ENCODE measurements at regions of chr19 and their contacts with region 1.

Region 1: GRCh38 chr19:17305517-17306284 is at the start of gene MRPL34:
- DNase-seq: peak; percentile 85 to 99 (median 92)
- ATAC-seq: peak; percentile 53
- H3K4me3 ChIP-seq: peak within 1 kb of the TSS; percentile 96
- H3K4me3 Mint-ChIP-seq: peak within 1 kb of the TSS; percentile 94
- H3K27ac ChIP-seq: peak within 1 kb of the TSS; percentile 71 to 85
- H3K27ac Mint-ChIP-seq: peak within 1 kb of the TSS; percentile 90
- H3K4me1 ChIP-seq: peaks cover 66% of the 10 kb centered on the region
- H3K4me1 Mint-ChIP-seq: peaks cover 65% of the 10 kb centered on the region
- H3K27me3 ChIP-seq: no peaks in the 10 kb centered on the region
- H3K27me3 Mint-ChIP-seq: no peaks in the 10 kb centered on the region
- CTCF ChIP-seq: no peak
- total RNA-seq, gene MRPL34: 28.4 to 28.7 TPM

Region 2: GRCh38 chr19:17226002-17226933 is 79.4 kb before region 1 on chr19 and contains the start of gene OCEL1:
- CTCF ChIA-PET with region 1: interaction called, 3 read pairs
- POLR2A ChIA-PET with region 1: interaction called, 9 read pairs
- intact Hi-C with region 1: loop called in 1 of 2 experiments (anchors 2 kb)
- DNase-seq: peak; percentile 90 to 99 (median 96)
- ATAC-seq: peak; percentile 88
- H3K4me3 ChIP-seq: peak within 1 kb of the TSS; percentile 61
- H3K4me3 Mint-ChIP-seq: peak within 1 kb of the TSS; percentile 95
- H3K27ac ChIP-seq: peak within 1 kb of the TSS; percentile 70 to 84
- H3K27ac Mint-ChIP-seq: peak within 1 kb of the TSS; percentile 90
- H3K4me1 ChIP-seq: peaks cover 24% of the 10 kb centered on the region
- H3K4me1 Mint-ChIP-seq: peaks cover 4% of the 10 kb centered on the region
- H3K27me3 ChIP-seq: no peaks in the 10 kb centered on the region
- H3K27me3 Mint-ChIP-seq: no peaks in the 10 kb centered on the region
- CTCF ChIP-seq: no peak
- total RNA-seq, gene OCEL1: 20.5 to 22.2 TPM

Region 3: GRCh38 chr19:17266975-17267788 is 38.5 kb before region 1 on chr19 and contains the start of gene BABAM1:
- CTCF ChIA-PET with region 1: no interaction called
- POLR2A ChIA-PET with region 1: interaction called, 17 read pairs
- intact Hi-C with region 1: loop called in 1 of 2 experiments (anchors 1 kb)
- DNase-seq: peak; percentile 85 to 99 (median 92)
- ATAC-seq: peak; percentile 94
- H3K4me3 ChIP-seq: peak within 1 kb of the TSS; percentile 84
- H3K4me3 Mint-ChIP-seq: peak within 1 kb of the TSS; percentile 83
- H3K27ac ChIP-seq: peak within 1 kb of the TSS; percentile 47 to 63
- H3K27ac Mint-ChIP-seq: peak within 1 kb of the TSS; percentile 69
- H3K4me1 ChIP-seq: peaks cover 39% of the 10 kb centered on the region
- H3K4me1 Mint-ChIP-seq: peaks cover 15% of the 10 kb centered on the region
- H3K27me3 ChIP-seq: no peaks in the 10 kb centered on the region
- H3K27me3 Mint-ChIP-seq: no peaks in the 10 kb centered on the region
- CTCF ChIP-seq: no peak
- total RNA-seq, gene BABAM1: 56.2 to 63.5 TPM

Region 4: GRCh38 chr19:17292286-17293097 is 13.2 kb before region 1 on chr19:
- CTCF ChIA-PET with region 1: interaction called, 27 read pairs
- POLR2A ChIA-PET with region 1: interaction called, 18 read pairs
- intact Hi-C with region 1: loop called (anchors 1 kb)
- DNase-seq: peak; percentile 58 to 91 (median 71)
- ATAC-seq: peak; percentile 98
- H3K4me3 ChIP-seq: peak overlapping the region; percentile 83
- H3K4me3 Mint-ChIP-seq: peak overlapping the region; percentile 92
- H3K27ac ChIP-seq: no peak overlapping the region
- H3K27ac Mint-ChIP-seq: peak overlapping the region; percentile 19
- H3K4me1 ChIP-seq: peaks cover 18% of the 10 kb centered on the region
- H3K4me1 Mint-ChIP-seq: peaks cover 9% of the 10 kb centered on the region
- H3K27me3 ChIP-seq: no peaks in the 10 kb centered on the region
- H3K27me3 Mint-ChIP-seq: peaks cover 4% of the 10 kb centered on the region
- CTCF ChIP-seq: peak; percentile 84

Region 5: DNA sequence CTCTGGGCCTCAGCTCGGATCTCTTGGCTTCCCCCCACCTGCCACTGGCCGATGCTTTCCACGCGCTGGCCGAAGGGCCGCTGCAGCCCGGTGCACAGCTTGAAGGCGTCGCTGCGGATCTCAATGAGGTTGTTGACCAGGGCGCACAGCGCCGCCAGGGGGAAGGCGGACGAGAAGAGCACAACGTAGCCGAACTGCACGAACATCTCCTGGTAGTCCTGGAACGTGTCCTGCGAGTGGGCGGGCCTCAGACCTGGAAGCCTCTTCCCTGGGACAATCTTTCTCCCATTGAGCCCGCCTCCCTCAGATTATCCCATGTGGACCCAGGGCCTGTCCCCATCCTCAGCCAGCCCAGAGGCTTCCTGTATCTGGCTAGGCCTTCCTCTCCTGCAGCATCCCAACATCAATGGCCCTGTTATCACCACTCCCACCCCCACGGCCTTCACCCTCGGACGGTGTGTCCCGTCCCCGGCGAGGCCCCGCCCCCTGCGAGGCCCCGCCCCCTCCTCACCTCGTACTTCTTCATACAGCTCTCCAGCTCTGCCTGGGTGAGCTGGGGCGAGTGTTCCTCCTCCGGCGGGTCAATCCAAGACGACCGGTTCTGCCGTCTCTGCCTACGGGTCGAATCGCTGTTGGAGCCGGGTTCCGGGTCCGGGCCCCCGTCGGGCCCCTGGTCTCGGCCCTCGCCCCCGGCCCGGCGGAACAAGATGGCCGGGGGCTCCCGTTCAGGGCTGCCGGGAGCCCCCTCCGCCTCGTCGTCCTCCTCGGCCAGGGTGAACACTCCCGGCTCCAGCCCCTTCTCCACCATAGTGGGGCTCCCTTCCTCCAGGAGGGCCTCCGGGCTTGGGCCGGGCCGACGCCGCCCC is 22.2 kb after region 1 on chr19:
- CTCF ChIA-PET with region 1: interaction called, 13 read pairs
- POLR2A ChIA-PET with region 1: interaction called, 29 read pairs
- intact Hi-C with region 1: no loop called
- DNase-seq: peak in 13 of 14 experiments; percentile 40 to 82 (median 54)
- ATAC-seq: peak; percentile 73
- H3K4me3 ChIP-seq: peak overlapping the region; percentile 61
- H3K4me3 Mint-ChIP-seq: peak overlapping the region; percentile 85
- H3K27ac ChIP-seq: peak overlapping the region in 1 of 2 donors; percentile 59
- H3K27ac Mint-ChIP-seq: peak overlapping the region; percentile 51
- H3K4me1 ChIP-seq: peaks cover 34% of the 10 kb centered on the region
- H3K4me1 Mint-ChIP-seq: peaks cover 13% of the 10 kb centered on the region
- H3K27me3 ChIP-seq: no peaks in the 10 kb centered on the region
- H3K27me3 Mint-ChIP-seq: no peaks in the 10 kb centered on the region
- CTCF ChIP-seq: no peak

Region 6: DNA sequence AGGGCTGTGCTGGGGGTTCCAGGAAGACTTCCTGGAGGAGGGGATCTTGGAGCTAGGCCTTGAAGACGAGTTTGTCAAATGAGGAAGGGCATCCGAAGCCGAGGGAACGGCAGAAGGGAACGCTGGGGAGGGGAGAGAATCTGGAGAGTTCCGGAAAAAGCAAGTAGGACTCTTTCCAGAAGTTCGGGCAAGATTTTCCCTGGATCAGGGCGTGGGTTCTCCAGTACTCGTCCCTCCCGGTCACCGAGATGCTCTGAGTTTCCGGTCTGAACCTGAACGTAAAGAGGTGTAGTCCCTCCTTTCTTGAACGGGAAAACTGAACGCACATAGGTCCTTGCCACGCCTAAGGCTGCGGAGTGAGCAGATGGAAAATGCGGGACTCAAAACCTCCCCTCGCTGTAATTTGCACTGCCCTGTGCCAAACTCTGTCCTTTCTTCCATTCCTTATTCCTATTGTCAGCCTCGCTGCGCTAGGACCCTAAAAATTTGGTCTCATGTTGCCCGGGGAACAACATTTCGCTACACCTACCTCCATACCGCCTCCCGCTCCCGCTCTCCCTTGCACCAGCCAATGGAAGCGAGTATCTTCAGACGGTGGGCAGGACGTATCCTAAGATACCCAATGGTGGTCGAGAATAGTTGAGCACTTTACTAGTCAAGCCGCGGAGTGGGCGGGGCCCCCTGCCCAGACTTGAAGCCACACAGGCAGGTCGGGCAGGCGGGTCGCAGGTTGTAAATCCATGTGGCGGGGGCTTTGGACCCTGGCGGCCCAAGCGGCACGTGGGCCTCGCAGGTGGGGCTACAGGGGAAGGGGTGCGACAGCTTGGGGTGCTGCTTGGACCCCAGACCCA is 31.4 kb after region 1 on chr19 and contains the start of gene GTPBP3:
- CTCF ChIA-PET with region 1: interaction called, 11 read pairs
- POLR2A ChIA-PET with region 1: interaction called, 31 read pairs
- intact Hi-C with region 1: loop called (anchors 1 kb)
- DNase-seq: peak; percentile 92 to 98 (median 95)
- ATAC-seq: peak; percentile 89
- H3K4me3 ChIP-seq: peak within 1 kb of the TSS; percentile 71
- H3K4me3 Mint-ChIP-seq: peak within 1 kb of the TSS; percentile 93
- H3K27ac ChIP-seq: peak within 1 kb of the TSS; percentile 73 to 79
- H3K27ac Mint-ChIP-seq: peak within 1 kb of the TSS; percentile 86
- H3K4me1 ChIP-seq: peaks cover 54% of the 10 kb centered on the region
- H3K4me1 Mint-ChIP-seq: peaks cover 36% of the 10 kb centered on the region
- H3K27me3 ChIP-seq: no peaks in the 10 kb centered on the region
- H3K27me3 Mint-ChIP-seq: no peaks in the 10 kb centered on the region
- CTCF ChIP-seq: no peak
- total RNA-seq, gene GTPBP3: 21.2 to 24.0 TPM

Region 7: GRCh38 chr19:17358395-17358794 is 52.7 kb after region 1 on chr19:
- CTCF ChIA-PET with region 1: no interaction called
- POLR2A ChIA-PET with region 1: no interaction called
- intact Hi-C with region 1: no loop called
- DNase-seq: no peak
- ATAC-seq: no peak
- H3K4me3 ChIP-seq: no peak overlapping the region
- H3K4me3 Mint-ChIP-seq: no peak overlapping the region
- H3K27ac ChIP-seq: no peak overlapping the region
- H3K27ac Mint-ChIP-seq: no peak overlapping the region
- H3K4me1 ChIP-seq: no peaks in the 10 kb centered on the region
- H3K4me1 Mint-ChIP-seq: no peaks in the 10 kb centered on the region
- H3K27me3 ChIP-seq: no peaks in the 10 kb centered on the region
- H3K27me3 Mint-ChIP-seq: peaks cover 5% of the 10 kb centered on the region
- CTCF ChIP-seq: no peak

Region 8: DNA sequence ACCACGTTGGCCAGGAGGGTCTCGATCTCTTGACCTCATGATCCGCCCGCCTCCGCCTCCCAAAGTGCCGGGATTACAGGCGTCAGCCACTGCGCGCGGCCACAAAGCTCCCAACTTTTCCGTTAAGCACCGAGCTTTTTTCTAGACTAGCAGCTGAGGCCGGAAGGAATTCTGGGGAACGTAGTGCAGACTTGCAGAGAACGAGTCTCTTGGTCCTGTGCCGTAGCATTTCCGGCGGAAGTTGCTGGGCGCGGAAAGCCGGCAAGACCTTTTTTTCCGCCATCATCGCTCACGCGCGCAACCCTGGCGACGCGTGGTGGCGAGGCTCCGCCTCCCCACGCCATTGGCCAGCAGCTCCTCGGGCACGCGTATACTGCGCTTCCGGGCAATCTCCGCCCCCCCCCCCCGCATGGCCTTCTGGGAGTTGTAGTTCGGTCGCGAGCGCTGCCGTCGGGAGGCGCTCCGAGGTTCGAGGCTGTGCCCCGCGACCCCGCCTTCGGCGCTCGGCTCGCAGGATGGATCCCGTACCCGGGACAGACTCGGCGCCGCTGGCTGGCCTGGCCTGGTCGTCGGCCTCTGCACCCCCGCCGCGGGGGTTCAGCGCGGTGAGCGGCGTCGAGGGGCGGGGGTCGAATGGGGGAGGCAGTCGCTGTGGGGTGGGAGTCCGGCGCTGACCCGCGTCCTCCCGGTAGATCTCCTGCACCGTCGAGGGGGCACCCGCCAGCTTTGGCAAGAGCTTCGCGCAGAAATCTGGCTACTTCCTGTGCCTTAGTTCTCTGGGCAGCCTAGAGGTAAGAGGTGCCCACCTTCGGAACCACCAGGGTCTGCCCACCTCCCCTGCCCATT is 114.1 kb after region 1 on chr19 and contains the start of gene MVB12A:
- CTCF ChIA-PET with region 1: no interaction called
- POLR2A ChIA-PET with region 1: interaction called, 10 read pairs
- intact Hi-C with region 1: no loop called
- DNase-seq: peak; percentile 88 to 100 (median 95)
- ATAC-seq: peak; percentile 97
- H3K4me3 ChIP-seq: peak within 1 kb of the TSS; percentile 84
- H3K4me3 Mint-ChIP-seq: peak within 1 kb of the TSS; percentile 94
- H3K27ac ChIP-seq: peak within 1 kb of the TSS in 1 of 2 donors; percentile 32
- H3K27ac Mint-ChIP-seq: peak within 1 kb of the TSS; percentile 80
- H3K4me1 ChIP-seq: peaks cover 23% of the 10 kb centered on the region
- H3K4me1 Mint-ChIP-seq: peaks cover 19% of the 10 kb centered on the region
- H3K27me3 ChIP-seq: no peaks in the 10 kb centered on the region
- H3K27me3 Mint-ChIP-seq: no peaks in the 10 kb centered on the region
- CTCF ChIP-seq: no peak
- total RNA-seq, gene MVB12A: 9.8 to 10.7 TPM